Activated T-helper 1 cell treated with anti-CD3 and anti-CD28 coated beads, Interleukin-12 subunit alpha, Interleukin-12 subunit beta, Interleukin-2, Interleukin-4 antibody, amounts not matched to agents 30 ng/mL and 10 ng/mL and 1 ng/mL, durations not matched to agents 14 hours and 24 hours and 36 hours (primary cell): ENCODE measurements at regions of chr19 and their contacts with region 1.

Region 1: GRCh38 chr19:47130591-47131227 is at the start of gene SAE1:
- DNase-seq: peak; percentile 93
- H3K4me3 Mint-ChIP-seq: peak within 1 kb of the TSS; percentile 100
- H3K27ac Mint-ChIP-seq: peak within 1 kb of the TSS; percentile 97
- H3K4me1 Mint-ChIP-seq: peaks cover 56% of the 10 kb centered on the region
- H3K27me3 Mint-ChIP-seq: peaks cover 4% of the 10 kb centered on the region
- total RNA-seq, gene SAE1: 141 and 142 TPM in 2 replicates

Region 2: DNA sequence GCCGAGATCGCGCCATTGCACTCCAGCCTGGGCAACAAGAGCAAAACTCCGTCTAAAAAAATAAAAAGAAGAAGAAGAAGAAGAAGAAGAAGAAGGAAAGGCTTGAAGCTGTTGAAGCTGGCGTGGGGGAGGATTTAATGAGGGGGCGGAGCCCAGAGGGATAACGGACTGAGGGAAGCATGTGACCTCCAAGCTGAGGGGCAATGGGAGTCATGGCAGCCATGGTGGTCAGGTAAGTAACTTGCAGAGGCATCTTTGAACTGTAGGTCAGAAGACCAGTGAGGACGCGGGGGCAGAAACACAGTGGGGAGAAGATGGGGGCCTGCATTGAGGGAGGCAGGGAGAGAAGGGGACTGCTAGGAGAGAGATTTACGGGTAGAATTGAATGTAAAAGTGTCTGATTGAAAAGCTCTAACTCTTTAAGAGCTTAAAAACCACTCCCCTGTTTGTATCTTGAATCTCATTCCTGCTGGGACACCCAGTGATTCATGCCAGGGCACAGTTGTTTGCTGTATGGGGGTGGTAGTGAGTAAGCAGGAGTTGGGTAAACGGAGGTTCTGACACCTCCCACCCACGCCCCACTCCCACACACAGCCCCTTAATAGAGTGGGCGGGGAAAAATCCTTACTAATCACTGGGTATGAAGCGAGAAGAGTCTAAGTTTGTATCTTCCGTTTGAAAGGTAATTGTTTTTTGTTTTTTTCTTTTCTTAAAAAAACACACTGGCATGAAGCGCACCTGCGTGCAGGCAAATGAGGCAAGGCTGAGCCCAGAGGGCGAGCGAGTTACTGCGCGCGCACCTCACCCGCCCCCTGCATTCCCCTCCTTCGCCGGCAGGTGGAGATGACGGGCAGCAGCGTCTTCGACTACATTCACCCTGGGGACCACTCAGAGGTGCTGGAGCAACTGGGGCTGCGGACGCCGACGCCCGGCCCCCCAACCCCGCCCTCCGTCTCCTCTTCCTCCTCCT is 95.3 kb before region 1 on chr19:
- intact Hi-C with region 1: loop called (anchors 1 kb)
- DNase-seq: peak; percentile 93
- H3K4me3 Mint-ChIP-seq: peak overlapping the region; percentile 86
- H3K27ac Mint-ChIP-seq: peak overlapping the region; percentile 92
- H3K4me1 Mint-ChIP-seq: peaks cover 24% of the 10 kb centered on the region
- H3K27me3 Mint-ChIP-seq: peaks cover 14% of the 10 kb centered on the region

Region 3: GRCh38 chr19:47112997-47113849 is 17.5 kb before region 1 on chr19 and contains the start of gene ZC3H4:
- intact Hi-C with region 1: loop called (anchors 1 kb)
- DNase-seq: peak; percentile 100
- H3K4me3 Mint-ChIP-seq: peak within 1 kb of the TSS; percentile 92
- H3K27ac Mint-ChIP-seq: peak within 1 kb of the TSS; percentile 99
- H3K4me1 Mint-ChIP-seq: peaks cover 33% of the 10 kb centered on the region
- H3K27me3 Mint-ChIP-seq: no peaks in the 10 kb centered on the region
- total RNA-seq, gene ZC3H4: 111 and 114 TPM in 2 replicates

Region 4: DNA sequence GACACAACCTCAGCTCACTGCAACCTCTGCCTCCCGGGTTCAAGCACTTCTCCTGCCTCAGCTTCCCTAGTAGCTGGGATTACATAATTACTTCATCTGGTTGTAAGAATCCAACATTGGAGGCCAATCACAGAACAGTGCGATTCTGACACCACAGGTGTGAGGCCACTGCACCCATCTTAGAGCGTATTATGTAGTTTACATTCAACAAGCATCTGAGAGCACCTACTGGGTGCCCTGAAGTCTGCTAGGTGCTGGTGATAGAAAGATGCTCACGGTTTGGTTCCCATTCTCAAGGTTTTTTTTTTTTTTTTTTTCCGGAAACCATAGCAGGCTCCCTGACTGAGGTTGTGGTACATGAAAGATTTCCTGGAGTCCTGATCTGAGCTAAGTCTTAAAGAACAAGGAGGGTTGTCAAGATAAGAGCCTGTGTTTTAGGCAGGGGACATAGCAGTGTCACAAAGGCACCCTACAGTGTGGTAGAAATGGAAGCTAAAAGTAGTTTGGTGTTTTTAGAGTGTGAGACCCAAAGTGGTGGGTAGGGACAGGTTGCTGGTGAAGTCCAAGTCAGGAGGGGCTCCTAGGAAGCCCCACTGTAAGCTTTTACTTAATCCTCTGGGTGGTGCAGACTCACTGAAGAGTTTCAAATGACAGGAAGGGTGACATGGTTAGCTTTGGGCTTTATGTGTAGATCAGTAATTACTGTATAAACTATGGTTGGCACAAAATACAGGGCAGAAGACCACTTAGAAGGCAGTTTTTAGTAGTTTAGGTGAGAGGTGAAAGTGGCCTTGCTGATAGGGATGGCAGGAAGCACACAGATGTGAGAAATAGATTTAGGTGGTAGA is 15.2 kb after region 1 on chr19:
- intact Hi-C with region 1: loop called (anchors 2 kb)
- DNase-seq: no peak
- H3K4me3 Mint-ChIP-seq: peak overlapping the region; percentile 43
- H3K27ac Mint-ChIP-seq: peak overlapping the region; percentile 80
- H3K4me1 Mint-ChIP-seq: peaks cover 52% of the 10 kb centered on the region
- H3K27me3 Mint-ChIP-seq: no peaks in the 10 kb centered on the region